ENCODE measurements at regions of chr2 and their contacts with region 1.

Region 1: DNA sequence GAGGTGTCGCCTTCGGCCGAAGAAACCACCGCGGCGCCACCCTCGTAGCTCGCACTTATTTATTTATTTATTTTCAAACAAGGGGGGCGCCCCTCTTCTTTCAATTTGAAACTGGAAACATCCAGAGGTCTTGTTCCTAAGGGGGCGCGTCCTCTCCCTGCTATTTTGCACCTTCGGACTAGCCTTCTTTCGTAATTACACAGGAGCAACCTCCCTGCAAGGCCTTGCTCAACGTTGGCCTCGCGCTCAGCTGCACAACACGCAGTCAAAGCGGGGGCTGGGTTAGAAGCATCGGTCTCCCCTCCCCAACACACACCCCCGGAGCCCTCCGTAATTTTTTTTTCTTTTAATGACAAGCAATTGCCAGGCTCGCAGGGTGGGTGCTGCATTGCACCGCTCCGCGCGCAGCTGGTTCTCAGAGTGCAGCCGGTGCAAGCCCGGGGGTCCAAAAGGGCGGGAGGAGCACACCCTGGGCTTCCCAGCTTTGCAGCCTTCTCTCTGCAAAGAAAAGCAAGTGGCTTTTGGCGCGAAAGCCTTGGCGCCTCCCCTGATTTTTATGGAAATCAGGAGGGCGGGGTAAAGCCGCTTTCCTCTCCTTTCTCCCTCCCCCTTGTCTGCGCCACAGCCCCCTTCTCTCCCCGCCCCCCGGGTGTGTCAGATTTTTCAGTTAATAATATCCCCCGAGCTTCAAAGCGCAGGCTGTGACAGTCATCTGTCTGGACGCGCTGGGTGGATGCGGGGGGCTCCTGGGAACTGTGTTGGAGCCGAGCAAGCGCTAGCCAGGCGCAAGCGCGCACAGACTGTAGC is at the start of gene MYCN:
- DNase-seq: peak; percentile 78
- ATAC-seq: peak; percentile 46
- H3K4me3 Mint-ChIP-seq: peak within 1 kb of the TSS; percentile 52
- H3K27ac Mint-ChIP-seq: no peak within 1 kb of the TSS
- H3K4me1 Mint-ChIP-seq: peaks cover 25% of the 10 kb centered on the region
- H3K27me3 Mint-ChIP-seq: peaks cover 41% of the 10 kb centered on the region
- total RNA-seq, gene MYCN: 0.18 to 0.28 TPM

Region 2: GRCh38 chr2:15636972-15637785 is 302.9 kb before region 1 on chr2:
- CTCF ChIA-PET with region 1: no interaction called
- POLR2A ChIA-PET with region 1: no interaction called
- intact Hi-C with region 1: loop called in 1 of 2 experiments (anchors 5 kb)
- DNase-seq: peak; percentile 77
- ATAC-seq: peak; percentile 89
- H3K4me3 Mint-ChIP-seq: no peak overlapping the region
- H3K27ac Mint-ChIP-seq: no peak overlapping the region
- H3K4me1 Mint-ChIP-seq: peaks cover 6% of the 10 kb centered on the region
- H3K27me3 Mint-ChIP-seq: no peaks in the 10 kb centered on the region

Region 3: GRCh38 chr2:16012619-16013358 is 72.7 kb after region 1 on chr2:
- CTCF ChIA-PET with region 1: no interaction called
- POLR2A ChIA-PET with region 1: no interaction called
- intact Hi-C with region 1: loop called in 1 of 2 experiments (anchors 10 kb)
- DNase-seq: no peak
- ATAC-seq: no peak
- H3K4me3 Mint-ChIP-seq: no peak overlapping the region
- H3K27ac Mint-ChIP-seq: no peak overlapping the region
- H3K4me1 Mint-ChIP-seq: peaks cover 10% of the 10 kb centered on the region
- H3K27me3 Mint-ChIP-seq: peaks cover 29% of the 10 kb centered on the region

Region 4: GRCh38 chr2:16218625-16219024 is 278.6 kb after region 1 on chr2:
- CTCF ChIA-PET with region 1: interaction called, 5 read pairs
- POLR2A ChIA-PET with region 1: no interaction called
- intact Hi-C with region 1: loop called in 1 of 2 experiments (anchors 1 kb)
- DNase-seq: peak; percentile 39
- ATAC-seq: no peak
- H3K4me3 Mint-ChIP-seq: no peak overlapping the region
- H3K27ac Mint-ChIP-seq: no peak overlapping the region
- H3K4me1 Mint-ChIP-seq: no peaks in the 10 kb centered on the region
- H3K27me3 Mint-ChIP-seq: peaks cover 5% of the 10 kb centered on the region

Region 5: DNA sequence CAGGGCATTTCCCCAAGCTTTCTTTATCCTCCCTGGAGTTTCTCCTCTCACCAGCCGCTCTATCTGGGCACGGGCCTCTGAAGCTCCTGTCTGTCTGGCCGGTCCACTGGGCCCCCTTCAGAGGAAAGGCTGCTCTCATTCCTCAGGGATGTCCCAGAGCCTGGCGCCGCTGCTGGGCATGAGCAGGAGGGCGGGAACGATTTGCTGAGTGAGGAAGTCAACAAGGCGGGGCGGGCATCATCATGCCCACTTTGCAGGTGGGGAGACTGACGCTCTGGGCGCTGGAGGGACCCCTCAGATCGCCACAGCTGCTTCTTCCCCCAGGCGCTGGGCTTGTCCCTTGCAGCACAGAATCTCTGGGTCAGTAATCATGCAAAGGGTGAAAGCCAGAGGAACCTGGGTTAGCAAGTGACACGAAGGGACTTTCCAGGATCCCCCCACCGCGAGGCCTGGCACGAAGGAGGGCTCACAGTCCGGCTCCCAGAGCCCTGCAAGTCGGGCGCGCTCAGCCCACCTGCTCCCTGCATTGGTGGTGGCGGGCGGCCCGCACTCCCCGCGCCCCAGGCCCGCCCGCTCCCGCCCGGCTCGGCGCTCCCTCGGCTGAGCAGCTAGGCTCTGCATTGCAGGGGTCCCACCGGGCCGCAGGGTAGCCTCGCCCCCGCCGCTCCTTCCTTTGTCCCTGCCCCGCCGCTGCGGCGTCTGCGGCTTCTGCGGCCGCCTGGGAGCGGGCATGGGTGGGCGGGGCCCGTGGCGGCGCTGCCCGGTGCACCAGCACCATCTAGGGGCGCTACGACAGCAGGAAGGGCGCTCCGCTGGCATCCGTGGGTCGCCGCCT is 567.8 kb after region 1 on chr2:
- CTCF ChIA-PET with region 1: no interaction called
- POLR2A ChIA-PET with region 1: no interaction called
- intact Hi-C with region 1: loop called (anchors 1 to 5 kb)
- DNase-seq: peak; percentile 46
- ATAC-seq: peak; percentile 30
- H3K4me3 Mint-ChIP-seq: no peak overlapping the region
- H3K27ac Mint-ChIP-seq: no peak overlapping the region
- H3K4me1 Mint-ChIP-seq: no peaks in the 10 kb centered on the region
- H3K27me3 Mint-ChIP-seq: peaks cover 26% of the 10 kb centered on the region

Measured in activated CD4-positive, alpha-beta T cell treated with anti-CD3 and anti-CD28 coated beads for 36 hours (primary cell).